Aorta (tissue), 5 donors: ENCODE measurements at regions of chr10 and their contacts with region 1.

Region 1: GRCh38 chr10:50624866-50625692 is 1.3 kb upstream of the SGMS1 start:
- DNase-seq: peak; percentile 78 to 82
- ATAC-seq: peak; percentile 88
- H3K4me3 ChIP-seq: peak overlapping the region; percentile 52 to 68
- H3K27ac ChIP-seq: peak overlapping the region in 1 of 2 donors; percentile 91
- H3K4me1 ChIP-seq: no peaks in the 10 kb centered on the region
- H3K27me3 ChIP-seq: no peaks in the 10 kb centered on the region

Region 2: GRCh38 chr10:50325449-50326171 is 299.5 kb before region 1 on chr10:
- intact Hi-C with region 1: loop called (anchors 5 to 10 kb)
- DNase-seq: peak; percentile 84 to 86
- ATAC-seq: peak; percentile 83
- H3K4me3 ChIP-seq: peak overlapping the region in 1 of 2 donors; percentile 64
- H3K27ac ChIP-seq: peak overlapping the region; percentile 87 to 90
- H3K4me1 ChIP-seq: peaks cover 4 to 7% of the 10 kb centered on the region in 2 donors
- H3K27me3 ChIP-seq: no peaks in the 10 kb centered on the region

Region 3: GRCh38 chr10:50375051-50375452 is 250.0 kb before region 1 on chr10:
- intact Hi-C with region 1: loop called in 1 of 2 experiments (anchors 5 kb)
- DNase-seq: no peak
- ATAC-seq: no peak
- H3K4me3 ChIP-seq: no peak overlapping the region
- H3K27ac ChIP-seq: no peak overlapping the region
- H3K4me1 ChIP-seq: peaks cover 0 to 5% of the 10 kb centered on the region in 2 donors
- H3K27me3 ChIP-seq: no peaks in the 10 kb centered on the region

Region 4: GRCh38 chr10:50417886-50418830 is 206.9 kb before region 1 on chr10:
- intact Hi-C with region 1: loop called (anchors 2 to 5 kb)
- DNase-seq: peak; percentile 81 to 92
- ATAC-seq: peak; percentile 87
- H3K4me3 ChIP-seq: peak overlapping the region; percentile 72 to 93
- H3K27ac ChIP-seq: peak overlapping the region in 1 of 2 donors; percentile 16
- H3K4me1 ChIP-seq: no peaks in the 10 kb centered on the region
- H3K27me3 ChIP-seq: no peaks in the 10 kb centered on the region

Region 5: GRCh38 chr10:50497757-50498156 is 127.3 kb before region 1 on chr10:
- intact Hi-C with region 1: loop called (anchors 2 to 10 kb)
- DNase-seq: no peak
- ATAC-seq: peak; percentile 59
- H3K4me3 ChIP-seq: peak overlapping the region in 1 of 2 donors; percentile 48
- H3K27ac ChIP-seq: peak overlapping the region in 1 of 2 donors; percentile 44
- H3K4me1 ChIP-seq: no peaks in the 10 kb centered on the region
- H3K27me3 ChIP-seq: no peaks in the 10 kb centered on the region

Region 6: DNA sequence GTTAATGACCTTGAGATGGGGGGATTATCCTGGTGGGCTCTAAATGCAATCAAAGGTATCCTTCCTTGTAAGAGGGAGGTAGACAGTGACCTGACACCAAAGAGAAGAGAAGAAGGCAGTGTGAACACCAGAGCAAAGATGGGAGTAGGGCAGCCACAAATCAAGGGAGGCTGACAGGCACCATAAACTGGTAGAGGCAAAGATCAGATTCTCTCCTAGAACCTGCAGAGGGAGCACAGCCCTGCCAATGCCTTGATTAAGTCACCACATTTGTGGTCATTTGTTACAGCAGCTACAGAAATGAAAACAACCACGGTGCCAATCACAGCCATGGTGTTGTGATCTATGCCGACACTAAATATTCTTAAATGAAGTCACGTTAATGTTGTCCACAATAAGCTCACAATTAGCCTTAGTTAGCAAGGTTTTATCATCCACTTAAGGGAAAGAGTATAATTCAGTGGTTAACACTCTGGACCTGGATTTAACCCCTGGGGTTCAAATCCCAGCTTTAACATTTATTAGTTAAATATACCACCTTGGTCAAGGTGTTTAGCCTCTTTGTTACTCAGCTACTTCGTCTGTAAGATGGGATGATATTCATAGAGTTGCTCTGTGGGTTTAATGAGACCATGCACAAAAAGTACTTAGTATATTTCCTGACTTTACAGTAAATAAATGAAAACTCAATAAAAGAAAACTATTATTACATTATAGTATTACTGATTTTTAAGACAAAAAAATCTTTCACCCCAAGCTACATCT is 72.1 kb before region 1 on chr10:
- intact Hi-C with region 1: loop called in 1 of 2 experiments (anchors 5 kb)
- DNase-seq: no peak
- ATAC-seq: no peak
- H3K4me3 ChIP-seq: no peak overlapping the region
- H3K27ac ChIP-seq: peak overlapping the region; percentile 45 to 51
- H3K4me1 ChIP-seq: peaks cover 8 to 10% of the 10 kb centered on the region in 2 donors
- H3K27me3 ChIP-seq: no peaks in the 10 kb centered on the region

Region 7: GRCh38 chr10:50561816-50562215 is 63.3 kb before region 1 on chr10:
- intact Hi-C with region 1: loop called in 1 of 2 experiments (anchors 2 kb)
- DNase-seq: no peak
- ATAC-seq: peak; percentile 49
- H3K4me3 ChIP-seq: no peak overlapping the region
- H3K27ac ChIP-seq: peak overlapping the region in 1 of 2 donors; percentile 26
- H3K4me1 ChIP-seq: peaks cover 0 to 5% of the 10 kb centered on the region in 2 donors
- H3K27me3 ChIP-seq: no peaks in the 10 kb centered on the region

Region 8: GRCh38 chr10:50593523-50594376 is 31.3 kb before region 1 on chr10:
- intact Hi-C with region 1: no loop called
- DNase-seq: no peak
- ATAC-seq: no peak
- H3K4me3 ChIP-seq: no peak overlapping the region
- H3K27ac ChIP-seq: no peak overlapping the region
- H3K4me1 ChIP-seq: peaks cover 4% of the 10 kb centered on the region in 2 donors
- H3K27me3 ChIP-seq: no peaks in the 10 kb centered on the region

Region 9: GRCh38 chr10:50674469-50675254 is 49.6 kb after region 1 on chr10:
- intact Hi-C with region 1: no loop called
- DNase-seq: no peak
- ATAC-seq: no peak
- H3K4me3 ChIP-seq: no peak overlapping the region
- H3K27ac ChIP-seq: no peak overlapping the region
- H3K4me1 ChIP-seq: no peaks in the 10 kb centered on the region
- H3K27me3 ChIP-seq: no peaks in the 10 kb centered on the region